ENCODE measurements at regions of chr14 and their contacts with region 1.

Region 1: GRCh38 chr14:59507063-59507780 is 22.9 kb downstream of the JKAMP start:
- DNase-seq: peak in 1 of 2 donors; percentile 34
- ATAC-seq: peak; percentile 39 to 82
- H3K4me3 ChIP-seq: no peak overlapping the region
- H3K27ac ChIP-seq: no peak overlapping the region
- H3K4me1 ChIP-seq: no peaks in the 10 kb centered on the region
- H3K27me3 ChIP-seq: no peaks in the 10 kb centered on the region
- CTCF ChIP-seq: peak; percentile 42 to 73 (median 62)
- POLR2A ChIP-seq: no peak

Region 2: DNA sequence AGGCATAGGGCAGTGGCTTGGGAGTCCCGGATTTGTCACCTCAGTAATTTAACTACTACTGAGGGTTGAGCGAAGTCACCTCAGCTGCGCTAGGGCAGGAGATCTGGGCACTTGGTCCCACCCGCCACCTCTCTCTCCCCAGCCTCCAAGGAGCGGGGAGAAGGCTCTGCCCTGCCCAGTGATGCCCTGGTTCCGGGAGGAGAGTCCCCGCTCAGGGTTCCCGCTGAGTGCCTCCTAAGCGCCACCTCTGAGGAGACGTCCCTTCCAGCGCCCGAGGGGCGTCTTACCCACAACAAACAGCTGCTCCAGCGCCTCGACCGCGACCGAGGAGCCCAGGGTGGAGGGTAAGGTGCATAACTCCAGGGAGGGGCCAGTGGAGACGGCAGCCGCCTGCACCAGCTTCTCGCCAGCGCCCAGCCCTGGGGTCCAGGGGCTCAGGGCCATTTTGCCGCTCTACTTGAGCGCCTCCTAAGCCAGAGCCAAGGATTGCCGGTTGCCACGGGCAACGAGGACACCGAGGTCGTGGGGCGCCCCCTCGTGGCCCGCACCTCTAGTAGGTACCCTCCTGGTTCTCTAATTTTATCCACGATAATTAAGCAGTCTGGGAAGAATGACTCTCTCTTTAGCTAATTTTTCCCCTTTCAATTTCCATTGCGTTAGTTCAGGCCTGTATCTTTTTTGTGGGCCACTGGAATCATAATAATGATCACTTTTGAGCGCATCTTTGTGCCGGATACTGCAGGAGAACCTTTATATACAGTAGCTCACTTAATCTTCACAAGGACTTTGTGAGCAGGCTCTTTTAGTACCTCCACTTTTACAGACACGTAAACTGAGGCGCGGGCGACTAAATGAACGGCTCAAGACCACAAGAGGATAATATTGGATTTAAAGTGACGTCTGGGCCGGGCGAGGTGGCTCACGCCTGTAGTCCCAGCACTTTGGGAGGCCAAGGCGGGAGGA is 69.4 kb after region 1 on chr14 and contains the start of gene CCDC175:
- in situ Hi-C with region 1: no loop called
- intact Hi-C with region 1: loop called (anchors 1 kb)
- DNase-seq: peak; percentile 47 to 60
- ATAC-seq: peak; percentile 73 to 87
- H3K4me3 ChIP-seq: peak within 1 kb of the TSS; percentile 39 to 51 (median 50)
- H3K27ac ChIP-seq: no peak within 1 kb of the TSS
- H3K4me1 ChIP-seq: no peaks in the 10 kb centered on the region
- H3K27me3 ChIP-seq: no peaks in the 10 kb centered on the region
- CTCF ChIP-seq: peak; percentile 39 to 70 (median 55)
- POLR2A ChIP-seq: no peak
- total RNA-seq, gene CCDC175: not detected

Region 3: DNA sequence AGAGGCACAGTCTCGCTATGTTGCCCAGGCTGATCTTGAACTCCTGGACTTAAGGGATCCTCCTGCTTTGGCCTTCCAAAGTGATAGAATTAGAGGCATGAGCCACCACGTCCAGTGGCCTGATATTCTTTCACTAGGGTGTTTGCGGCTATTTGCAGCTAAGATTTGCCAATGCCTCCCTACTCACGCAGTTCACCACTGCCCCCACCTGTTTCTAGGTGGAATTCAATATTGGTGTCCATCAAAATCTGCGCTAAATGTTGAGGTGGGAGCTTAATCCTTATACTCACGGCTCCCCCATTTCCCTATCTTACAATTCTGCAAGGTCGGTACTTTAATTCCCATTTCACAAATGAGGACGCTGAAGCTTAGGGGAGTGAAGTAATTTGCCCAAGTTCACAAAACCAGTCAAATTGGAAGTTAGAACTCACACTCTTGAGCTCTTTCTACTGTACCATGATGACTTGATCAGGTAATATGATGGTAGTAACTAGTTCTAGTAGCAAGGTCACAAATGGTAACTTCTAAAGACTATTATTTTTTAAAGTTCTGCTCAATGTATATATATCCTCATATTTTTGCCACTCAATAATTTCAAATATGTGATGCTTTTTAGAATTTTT is 390.6 kb after region 1 on chr14:
- in situ Hi-C with region 1: no loop called
- intact Hi-C with region 1: loop called (anchors 5 kb)
- DNase-seq: no peak
- ATAC-seq: no peak
- H3K4me3 ChIP-seq: no peak overlapping the region
- H3K27ac ChIP-seq: no peak overlapping the region
- H3K4me1 ChIP-seq: no peaks in the 10 kb centered on the region
- H3K27me3 ChIP-seq: no peaks in the 10 kb centered on the region
- CTCF ChIP-seq: no peak
- POLR2A ChIP-seq: no peak

Measured in gastrocnemius medialis (tissue), 4 donors.